Endothelial cell of umbilical vein (primary cell): ENCODE measurements at regions of chr2 and their contacts with region 1.

Region 1: DNA sequence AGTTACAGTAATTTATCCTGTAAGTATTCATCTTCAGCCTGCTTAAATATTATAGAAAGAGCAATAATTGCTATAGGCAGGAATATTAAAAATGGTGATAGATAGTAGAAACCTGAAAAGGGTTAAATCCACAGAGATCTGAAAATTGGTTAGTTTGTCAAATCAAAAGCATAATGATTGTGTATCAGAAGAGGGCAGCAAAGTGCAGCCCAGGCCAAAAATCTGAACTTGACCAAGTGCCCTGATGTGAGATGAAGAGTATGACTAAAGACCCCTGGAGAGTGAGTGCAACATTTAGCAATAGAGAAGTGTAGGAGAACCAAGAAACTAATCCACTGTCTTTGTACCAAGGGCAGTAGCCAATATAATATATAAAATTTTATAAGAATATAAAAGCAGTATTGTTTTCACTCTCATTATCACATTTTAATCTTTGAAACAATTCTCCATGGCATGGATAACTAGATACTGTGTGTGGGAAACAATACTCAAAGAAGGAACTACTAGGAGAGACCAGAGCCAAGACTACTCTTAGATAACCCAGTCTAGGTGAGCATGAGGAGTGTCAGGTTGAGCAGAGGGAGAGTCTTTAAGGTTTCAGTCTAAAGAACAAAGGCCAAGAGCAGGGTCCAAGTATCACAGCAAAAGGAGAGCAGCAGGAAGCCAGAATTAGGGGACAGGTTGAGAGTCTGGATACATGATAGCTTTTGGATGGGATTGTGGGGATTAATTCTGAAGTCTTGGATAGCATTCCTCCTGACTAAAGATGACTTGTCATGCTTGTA is 148.7 kb downstream of the CALCRL start:
- DNase-seq: peak; percentile 75
- H3K4me3 ChIP-seq: no peak overlapping the region
- H3K27ac ChIP-seq: peak overlapping the region; percentile 70
- H3K4me1 ChIP-seq: peaks cover 40% of the 10 kb centered on the region
- H3K27me3 ChIP-seq: no peaks in the 10 kb centered on the region
- CTCF ChIP-seq: peak; percentile 40 to 47
- POLR2A ChIP-seq: no peak

Region 2: DNA sequence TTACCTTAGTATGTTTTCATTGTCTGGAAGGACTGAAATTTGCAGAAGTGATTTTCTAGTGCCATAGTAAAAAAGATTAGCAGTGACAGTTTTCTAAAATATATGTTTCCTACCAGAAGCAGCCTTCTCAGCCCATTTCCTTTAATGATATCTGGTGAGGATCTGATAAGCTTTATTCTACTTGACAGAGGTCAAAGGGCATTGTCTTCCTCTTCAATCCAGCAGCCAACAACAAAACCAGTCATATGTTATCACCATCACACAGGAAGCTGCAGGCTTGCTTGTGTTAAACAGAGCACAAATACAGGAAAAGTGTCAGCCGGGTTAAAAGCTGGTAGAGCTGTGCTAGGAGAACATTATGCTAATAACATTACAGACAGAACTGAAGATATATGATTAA is 414.7 kb before region 1 on chr2:
- CTCF ChIA-PET with region 1: no interaction called
- POLR2A ChIA-PET with region 1: no interaction called
- dilution Hi-C with region 1: no loop called
- intact Hi-C with region 1: loop called (anchors 1 kb)
- DNase-seq: peak; percentile 98
- H3K4me3 ChIP-seq: no peak overlapping the region
- H3K27ac ChIP-seq: peak overlapping the region; percentile 71
- H3K4me1 ChIP-seq: peaks cover 55% of the 10 kb centered on the region
- H3K27me3 ChIP-seq: no peaks in the 10 kb centered on the region
- CTCF ChIP-seq: no peak
- POLR2A ChIP-seq: peak; percentile 86

Region 3: DNA sequence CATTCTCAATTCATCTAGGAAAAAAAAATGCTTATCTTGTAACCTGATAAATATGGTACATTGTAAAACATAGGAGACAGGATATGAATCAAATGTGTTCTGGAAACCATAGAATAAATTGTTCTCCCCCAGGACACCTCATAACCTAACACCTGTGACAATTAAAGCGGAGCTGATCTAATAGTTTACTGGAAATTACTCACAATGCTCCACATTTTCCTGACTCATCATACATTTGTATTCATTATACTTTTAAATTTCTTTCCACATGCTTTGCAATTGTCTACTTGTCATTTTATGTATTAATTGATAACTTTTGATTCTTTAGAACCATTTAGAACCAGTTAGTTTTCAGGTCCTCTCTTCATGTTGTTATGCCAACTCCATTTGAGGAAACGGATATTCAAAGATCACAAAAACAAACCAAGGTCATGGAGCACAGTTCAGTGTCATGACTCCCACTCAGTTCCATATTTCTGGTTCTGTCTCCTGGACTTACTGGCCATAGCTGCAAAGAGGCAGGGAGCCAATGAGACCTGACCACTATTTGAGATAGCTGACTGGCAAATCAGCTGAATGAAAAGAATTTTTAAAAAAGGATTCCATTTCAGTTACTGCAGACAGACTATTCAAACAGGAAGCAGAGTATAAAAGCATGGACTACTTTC is 20.3 kb after region 1 on chr2:
- CTCF ChIA-PET with region 1: interaction called, 8 read pairs
- POLR2A ChIA-PET with region 1: no interaction called
- dilution Hi-C with region 1: no loop called
- intact Hi-C with region 1: loop called (anchors 1 kb)
- DNase-seq: peak; percentile 96
- H3K4me3 ChIP-seq: peak overlapping the region in 1 of 3 experiments; percentile 3
- H3K27ac ChIP-seq: peak overlapping the region; percentile 94
- H3K4me1 ChIP-seq: peaks cover 47% of the 10 kb centered on the region
- H3K27me3 ChIP-seq: no peaks in the 10 kb centered on the region
- CTCF ChIP-seq: no peak
- POLR2A ChIP-seq: no peak

Region 4: GRCh38 chr2:187403568-187404260 is 104.4 kb after region 1 on chr2:
- CTCF ChIA-PET with region 1: interaction called, 3 read pairs
- POLR2A ChIA-PET with region 1: interaction called, 5 read pairs
- dilution Hi-C with region 1: no loop called
- intact Hi-C with region 1: loop called (anchors 1 kb)
- DNase-seq: peak; percentile 92
- H3K4me3 ChIP-seq: peak overlapping the region in 1 of 3 experiments; percentile 31
- H3K27ac ChIP-seq: peak overlapping the region; percentile 83
- H3K4me1 ChIP-seq: peaks cover 67% of the 10 kb centered on the region
- H3K27me3 ChIP-seq: no peaks in the 10 kb centered on the region
- CTCF ChIP-seq: no peak
- POLR2A ChIP-seq: peak; percentile 46

Region 5: GRCh38 chr2:187442378-187442777 is 143.1 kb after region 1 on chr2:
- CTCF ChIA-PET with region 1: interaction called, 10 read pairs
- POLR2A ChIA-PET with region 1: no interaction called
- dilution Hi-C with region 1: no loop called
- intact Hi-C with region 1: no loop called
- DNase-seq: no peak
- H3K4me3 ChIP-seq: peak overlapping the region in 2 of 3 experiments; percentile 60 to 100
- H3K27ac ChIP-seq: peak overlapping the region; percentile 88
- H3K4me1 ChIP-seq: peaks cover 68% of the 10 kb centered on the region
- H3K27me3 ChIP-seq: no peaks in the 10 kb centered on the region
- CTCF ChIP-seq: no peak
- POLR2A ChIP-seq: no peak

Region 6: DNA sequence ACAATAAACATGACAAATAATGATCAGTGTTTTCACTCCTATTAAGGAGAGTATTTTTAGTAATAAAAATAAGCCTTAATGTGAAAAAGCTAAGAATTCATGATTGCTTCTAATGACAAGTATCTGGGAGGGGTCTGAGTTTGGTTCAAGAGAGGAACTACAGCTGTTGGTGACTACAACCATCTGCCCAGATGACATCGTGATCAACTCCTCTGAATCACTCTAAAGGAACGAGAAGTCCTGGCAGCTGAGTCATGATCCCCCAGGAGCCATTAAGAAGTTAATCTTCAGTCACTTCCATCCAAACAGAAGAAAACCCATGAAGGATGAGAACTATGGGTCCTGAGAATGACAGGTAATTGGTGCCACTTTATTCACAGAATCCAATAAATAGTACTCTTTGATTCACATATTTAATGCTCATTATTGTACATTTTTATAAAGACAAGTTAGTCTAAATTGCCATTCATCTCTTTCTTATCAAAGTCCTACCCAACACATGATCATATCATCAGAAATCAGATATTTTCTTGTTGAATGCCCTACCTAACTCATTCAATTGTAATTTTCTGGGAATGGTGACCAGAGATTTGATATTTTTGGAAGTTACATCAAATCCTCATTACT is 248.2 kb after region 1 on chr2:
- CTCF ChIA-PET with region 1: no interaction called
- POLR2A ChIA-PET with region 1: no interaction called
- dilution Hi-C with region 1: no loop called
- intact Hi-C with region 1: loop called (anchors 5 kb)
- DNase-seq: peak; percentile 91
- H3K4me3 ChIP-seq: peak overlapping the region in 1 of 3 experiments; percentile 22
- H3K27ac ChIP-seq: peak overlapping the region; percentile 61
- H3K4me1 ChIP-seq: peaks cover 91% of the 10 kb centered on the region
- H3K27me3 ChIP-seq: no peaks in the 10 kb centered on the region
- CTCF ChIP-seq: no peak
- POLR2A ChIP-seq: peak; percentile 70